ENCODE measurements at regions of chr2 and their contacts with region 1.

Region 1: GRCh38 chr2:226489775-226490541 is 309.7 kb downstream of the IRS1 start:
- DNase-seq: peak; percentile 6
- H3K4me3 Mint-ChIP-seq: no peak overlapping the region
- H3K27ac Mint-ChIP-seq: no peak overlapping the region
- H3K4me1 Mint-ChIP-seq: peaks cover 5% of the 10 kb centered on the region
- H3K27me3 Mint-ChIP-seq: peaks cover 11% of the 10 kb centered on the region

Region 2: GRCh38 chr2:226423498-226423960 is 66.4 kb before region 1 on chr2:
- CTCF ChIA-PET with region 1: no interaction called
- intact Hi-C with region 1: loop called (anchors 2 kb)
- DNase-seq: peak; percentile 57
- H3K4me3 Mint-ChIP-seq: peak overlapping the region; percentile 17
- H3K27ac Mint-ChIP-seq: no peak overlapping the region
- H3K4me1 Mint-ChIP-seq: peaks cover 10% of the 10 kb centered on the region
- H3K27me3 Mint-ChIP-seq: peaks cover 10% of the 10 kb centered on the region

Region 3: DNA sequence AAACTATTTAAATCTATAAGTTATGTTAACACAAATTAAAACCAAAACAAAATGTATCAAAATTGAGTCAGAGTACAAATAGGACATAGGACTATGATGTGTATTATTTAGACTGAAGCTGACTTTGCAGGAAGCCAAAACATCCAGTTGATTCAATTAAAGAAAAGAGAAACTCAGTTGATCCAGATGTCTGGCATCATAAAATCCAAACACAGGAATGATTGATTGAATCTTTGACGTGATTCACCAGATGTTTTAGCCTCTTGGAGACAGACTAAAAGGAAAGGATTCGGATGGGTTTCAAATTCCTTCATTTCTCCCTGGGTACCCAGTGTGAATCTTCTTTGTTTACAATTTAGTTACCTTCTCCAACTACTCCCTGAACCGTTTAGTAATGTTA is 36.8 kb after region 1 on chr2:
- CTCF ChIA-PET with region 1: no interaction called
- intact Hi-C with region 1: no loop called
- DNase-seq: no peak
- H3K4me3 Mint-ChIP-seq: no peak overlapping the region
- H3K27ac Mint-ChIP-seq: no peak overlapping the region
- H3K4me1 Mint-ChIP-seq: no peaks in the 10 kb centered on the region
- H3K27me3 Mint-ChIP-seq: peaks cover 5% of the 10 kb centered on the region

Measured in activated naive CD4-positive, alpha-beta T cell treated with anti-CD3 and anti-CD28 coated beads for 36 hours (primary cell).